Left ventricle myocardium inferior (tissue), 1 donor: ENCODE measurements at regions of chr14 and their contacts with region 1.

Region 1: GRCh38 chr14:21014761-21015190 is 10.1 kb downstream of the NDRG2 start:
- DNase-seq: peak; percentile 79
- H3K4me3 ChIP-seq: no peak overlapping the region
- H3K27ac ChIP-seq: peak overlapping the region; percentile 51
- H3K4me1 ChIP-seq: peaks cover 41% of the 10 kb centered on the region
- H3K27me3 ChIP-seq: no peaks in the 10 kb centered on the region
- CTCF ChIP-seq: peak; percentile 95

Region 2: GRCh38 chr14:21039585-21040369 is 25.0 kb after region 1 on chr14:
- intact Hi-C with region 1: loop called (anchors 2 kb)
- DNase-seq: no peak
- H3K4me3 ChIP-seq: peak overlapping the region; percentile 48
- H3K27ac ChIP-seq: peak overlapping the region; percentile 88
- H3K4me1 ChIP-seq: peaks cover 48% of the 10 kb centered on the region
- H3K27me3 ChIP-seq: no peaks in the 10 kb centered on the region
- CTCF ChIP-seq: peak; percentile 84

Region 3: GRCh38 chr14:21145437-21145836 is 130.7 kb after region 1 on chr14:
- intact Hi-C with region 1: no loop called
- DNase-seq: no peak
- H3K4me3 ChIP-seq: no peak overlapping the region
- H3K27ac ChIP-seq: no peak overlapping the region
- H3K4me1 ChIP-seq: no peaks in the 10 kb centered on the region
- H3K27me3 ChIP-seq: peaks cover 17% of the 10 kb centered on the region
- CTCF ChIP-seq: no peak